ENCODE measurements at regions of chrX and their contacts with region 1.

Region 1: GRCh38 chrX:118116713-118117550 is at the start of gene KLHL13:
- DNase-seq: peak in 1 of 2 donors; percentile 63
- H3K4me3 ChIP-seq: peak within 1 kb of the TSS; percentile 47 to 83
- H3K27ac ChIP-seq: peak within 1 kb of the TSS; percentile 65 to 86
- H3K4me1 ChIP-seq: no peaks in the 10 kb centered on the region
- H3K27me3 ChIP-seq: no peaks in the 10 kb centered on the region
- CTCF ChIP-seq: no peak
- total RNA-seq, gene KLHL13: 7.0 TPM

Region 2: DNA sequence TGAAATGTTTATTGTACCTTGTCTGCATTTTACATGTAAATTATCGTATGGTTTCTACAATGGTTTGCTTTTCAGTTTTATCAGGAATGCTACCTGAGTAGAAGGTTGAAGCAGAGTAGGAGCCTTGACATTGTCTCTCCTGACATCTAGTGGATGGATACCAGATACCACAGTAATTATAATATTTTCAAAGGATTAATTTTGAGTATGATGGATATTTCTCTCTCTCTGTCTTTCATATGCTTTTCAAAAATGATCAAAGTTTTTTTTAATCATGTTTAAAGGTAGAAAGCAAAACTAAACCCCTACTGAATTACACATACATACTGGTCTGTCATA is 109.1 kb after region 1 on chrX:
- intact Hi-C with region 1: loop called (anchors 10 kb)
- DNase-seq: no peak
- H3K4me3 ChIP-seq: peak overlapping the region in 1 of 2 donors; percentile 26
- H3K27ac ChIP-seq: no peak overlapping the region
- H3K4me1 ChIP-seq: no peaks in the 10 kb centered on the region
- H3K27me3 ChIP-seq: no peaks in the 10 kb centered on the region
- CTCF ChIP-seq: peak in 2 of 3 experiments; percentile 30 to 50

Region 3: GRCh38 chrX:118448273-118448783 is 331.4 kb after region 1 on chrX:
- intact Hi-C with region 1: no loop called
- DNase-seq: no peak
- H3K4me3 ChIP-seq: no peak overlapping the region
- H3K27ac ChIP-seq: no peak overlapping the region
- H3K4me1 ChIP-seq: no peaks in the 10 kb centered on the region
- H3K27me3 ChIP-seq: no peaks in the 10 kb centered on the region
- CTCF ChIP-seq: no peak

Region 4: GRCh38 chrX:119222932-119223331 is 1106.0 kb after region 1 on chrX:
- intact Hi-C with region 1: no loop called
- DNase-seq: no peak
- H3K4me3 ChIP-seq: no peak overlapping the region
- H3K27ac ChIP-seq: no peak overlapping the region
- H3K4me1 ChIP-seq: no peaks in the 10 kb centered on the region
- H3K27me3 ChIP-seq: no peaks in the 10 kb centered on the region
- CTCF ChIP-seq: no peak